ENCODE measurements at regions of chr6 and their contacts with region 1.

Region 1: GRCh38 chr6:25263657-25264056 is 15.5 kb upstream of the CARMIL1 start:
- DNase-seq: no peak
- H3K4me3 Mint-ChIP-seq: no peak overlapping the region
- H3K27ac Mint-ChIP-seq: no peak overlapping the region
- H3K4me1 Mint-ChIP-seq: peaks cover 7% of the 10 kb centered on the region
- H3K27me3 Mint-ChIP-seq: peaks cover 26% of the 10 kb centered on the region

Region 2: DNA sequence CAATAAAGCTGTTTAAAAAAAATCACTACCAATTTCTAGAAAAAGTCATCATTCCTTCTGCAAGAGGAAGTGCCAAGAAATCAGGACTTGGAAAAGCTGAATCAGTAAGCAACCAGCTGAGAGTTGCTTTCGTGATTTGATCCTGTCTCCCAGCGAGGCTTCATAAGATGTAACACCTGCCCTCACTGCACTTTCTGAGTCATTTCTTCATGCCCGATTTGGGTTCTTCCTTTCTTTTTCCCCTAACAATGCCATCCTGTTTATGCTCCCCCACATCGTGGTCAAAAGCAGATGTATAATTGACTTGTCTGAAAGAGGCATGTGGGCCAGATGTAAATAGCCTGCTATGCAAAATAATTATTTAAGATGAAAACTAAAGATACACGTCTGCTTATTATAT is 380.0 kb before region 1 on chr6:
- intact Hi-C with region 1: no loop called
- DNase-seq: no peak
- H3K4me3 Mint-ChIP-seq: peak overlapping the region; percentile 66
- H3K27ac Mint-ChIP-seq: peak overlapping the region; percentile 91
- H3K4me1 Mint-ChIP-seq: peaks cover 79% of the 10 kb centered on the region
- H3K27me3 Mint-ChIP-seq: no peaks in the 10 kb centered on the region

Region 3: DNA sequence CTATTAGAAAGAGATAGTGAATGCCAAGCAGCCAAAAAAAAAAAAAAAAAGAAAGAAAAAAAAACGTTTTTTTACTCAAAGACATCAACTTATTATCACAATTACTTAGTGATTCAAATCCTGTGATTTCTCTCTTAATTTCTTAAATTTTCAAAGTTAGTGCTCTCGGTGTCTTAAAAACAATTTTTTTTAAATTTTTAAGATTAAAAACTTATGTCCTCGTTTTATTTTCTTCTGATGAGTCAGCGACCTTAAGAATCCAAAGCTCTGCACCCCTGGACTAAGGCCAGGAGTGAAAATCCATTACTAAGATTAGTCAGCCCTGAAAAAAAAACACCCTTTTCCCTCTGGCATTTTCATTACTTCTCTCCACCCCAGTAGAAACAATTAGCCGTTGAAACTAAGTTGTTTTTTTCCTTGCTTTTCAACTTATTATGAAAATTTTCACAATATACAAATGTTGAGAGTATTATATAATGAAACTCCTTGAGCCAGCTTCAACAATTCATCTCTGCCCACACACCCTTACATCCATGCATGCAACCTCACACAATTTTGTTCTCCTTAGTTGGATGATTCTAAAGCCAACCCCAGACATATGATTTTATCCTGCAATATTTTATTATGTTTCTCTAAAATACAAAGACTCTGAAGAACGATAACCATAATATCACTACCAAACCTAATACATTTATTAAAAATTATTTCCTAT is 70.0 kb before region 1 on chr6:
- intact Hi-C with region 1: no loop called
- DNase-seq: no peak
- H3K4me3 Mint-ChIP-seq: no peak overlapping the region
- H3K27ac Mint-ChIP-seq: no peak overlapping the region
- H3K4me1 Mint-ChIP-seq: peaks cover 6% of the 10 kb centered on the region
- H3K27me3 Mint-ChIP-seq: peaks cover 8% of the 10 kb centered on the region

Region 4: DNA sequence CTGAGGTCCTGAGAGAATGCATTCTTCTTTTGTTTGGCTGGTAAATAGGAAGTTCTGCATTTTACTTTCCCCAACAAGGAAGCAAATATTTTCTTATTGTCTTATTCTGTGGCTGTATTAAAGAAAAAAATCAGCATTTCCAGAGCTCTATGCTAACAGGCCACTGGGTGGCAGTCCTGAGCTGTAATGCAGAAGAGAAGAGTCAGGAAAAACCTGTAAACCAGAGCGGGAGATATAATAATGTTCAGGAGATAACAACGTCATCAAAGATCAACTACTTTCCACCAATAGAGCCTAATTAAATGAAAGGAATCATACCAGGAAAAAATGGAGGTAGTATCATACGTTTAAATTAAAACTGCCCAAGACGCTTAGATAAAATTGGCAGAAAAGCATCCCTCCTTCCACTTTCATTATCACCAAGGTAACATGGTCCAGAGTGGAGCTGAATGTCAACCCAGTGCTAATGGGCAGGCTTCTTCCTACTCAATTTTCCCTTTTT is 40.1 kb before region 1 on chr6:
- intact Hi-C with region 1: loop called (anchors 1 kb)
- DNase-seq: peak; percentile 24
- H3K4me3 Mint-ChIP-seq: peak overlapping the region; percentile 79
- H3K27ac Mint-ChIP-seq: no peak overlapping the region
- H3K4me1 Mint-ChIP-seq: peaks cover 14% of the 10 kb centered on the region
- H3K27me3 Mint-ChIP-seq: no peaks in the 10 kb centered on the region

Region 5: DNA sequence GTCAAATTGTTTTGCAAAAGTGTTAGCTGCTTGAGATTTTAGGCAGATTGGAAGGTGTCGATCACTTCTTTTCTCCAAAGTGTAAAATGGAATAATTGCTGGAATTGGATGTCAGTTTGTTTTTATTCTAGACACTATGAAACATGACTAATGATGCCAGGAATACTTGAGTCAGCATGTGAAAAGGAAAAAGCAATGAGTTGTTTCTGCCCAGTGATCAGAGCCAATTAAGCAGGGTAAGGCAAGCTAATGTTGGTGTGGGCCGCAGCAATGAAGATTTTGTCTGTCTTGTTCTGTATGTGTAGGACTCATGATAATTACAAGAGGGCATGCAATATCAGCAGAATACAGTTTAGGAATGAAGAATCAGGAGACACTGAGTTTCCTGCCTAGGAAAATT is 125.8 kb after region 1 on chr6:
- intact Hi-C with region 1: no loop called
- DNase-seq: no peak
- H3K4me3 Mint-ChIP-seq: no peak overlapping the region
- H3K27ac Mint-ChIP-seq: no peak overlapping the region
- H3K4me1 Mint-ChIP-seq: peaks cover 19% of the 10 kb centered on the region
- H3K27me3 Mint-ChIP-seq: no peaks in the 10 kb centered on the region